CD4-positive, alpha-beta T cell (primary cell): ENCODE measurements at regions of chr9 and their contacts with region 1.

Region 1: GRCh38 chr9:101533334-101534107 is at the start of gene RNF20:
- DNase-seq: peak; percentile 98 to 100 (median 99)
- ATAC-seq: peak; percentile 90
- H3K4me3 ChIP-seq: peak within 1 kb of the TSS; percentile 67
- H3K4me3 Mint-ChIP-seq: peak within 1 kb of the TSS; percentile 90
- H3K27ac ChIP-seq: peak within 1 kb of the TSS; percentile 91 to 96
- H3K27ac Mint-ChIP-seq: peak within 1 kb of the TSS; percentile 97
- H3K4me1 ChIP-seq: peaks cover 16% of the 10 kb centered on the region
- H3K4me1 Mint-ChIP-seq: peaks cover 16% of the 10 kb centered on the region
- H3K27me3 ChIP-seq: no peaks in the 10 kb centered on the region
- H3K27me3 Mint-ChIP-seq: peaks cover 4% of the 10 kb centered on the region
- CTCF ChIP-seq: no peak
- total RNA-seq, gene RNF20: 26.9 to 27.6 TPM

Region 2: DNA sequence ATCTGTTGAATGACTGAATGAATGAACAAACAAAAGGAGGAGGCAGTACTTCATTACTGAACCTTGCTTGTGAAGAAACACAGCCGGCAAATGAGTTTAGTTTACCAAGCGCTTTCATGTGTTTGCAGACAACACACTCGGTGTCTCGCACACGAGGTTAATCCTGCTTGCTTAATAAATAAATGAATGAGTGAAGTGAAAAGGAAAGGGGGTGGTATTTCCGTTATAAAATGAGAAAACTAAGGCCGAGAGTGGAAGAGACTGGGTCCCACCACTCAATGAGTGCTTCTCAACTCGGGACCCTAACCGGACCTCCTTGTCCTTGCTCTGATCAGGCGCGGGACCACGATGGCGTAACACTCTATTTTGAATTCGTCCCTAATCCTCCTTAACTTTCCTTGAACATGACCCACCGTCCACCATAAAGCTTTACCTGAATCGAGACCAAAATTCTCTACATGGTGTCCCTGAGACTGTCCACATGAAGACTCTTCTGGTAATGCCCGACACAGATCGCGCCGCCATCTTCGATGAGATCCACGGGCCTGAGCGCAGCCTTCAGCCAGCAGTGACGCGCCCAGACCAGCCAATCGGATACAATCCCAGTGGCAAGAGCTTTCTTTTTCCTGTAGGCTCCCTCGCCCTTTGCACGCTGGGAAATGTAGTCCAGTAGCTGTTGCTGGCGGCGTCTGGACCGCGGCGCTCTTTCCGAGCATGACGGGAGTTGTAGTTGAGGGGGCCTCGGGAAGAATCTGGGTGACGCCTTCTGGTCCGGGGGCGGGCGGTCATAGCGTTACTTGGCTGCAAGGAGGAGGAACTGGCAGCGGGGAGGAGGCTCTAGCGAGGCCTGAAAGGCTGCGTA is 135.2 kb before region 1 on chr9 and contains the starts of genes MRPL50 and ZNF189:
- CTCF ChIA-PET with region 1: no interaction called
- POLR2A ChIA-PET with region 1: interaction called, 31 read pairs
- intact Hi-C with region 1: loop called (anchors 1 to 2 kb)
- DNase-seq: peak; percentile 90 to 99 (median 94)
- ATAC-seq: peak; percentile 94
- H3K4me3 ChIP-seq: peak within 1 kb of the TSS; percentile 81
- H3K4me3 Mint-ChIP-seq: peak within 1 kb of the TSS; percentile 99
- H3K27ac ChIP-seq: peak within 1 kb of the TSS; percentile 87 to 92
- H3K27ac Mint-ChIP-seq: peak within 1 kb of the TSS; percentile 99
- H3K4me1 ChIP-seq: peaks cover 32% of the 10 kb centered on the region
- H3K4me1 Mint-ChIP-seq: peaks cover 86% of the 10 kb centered on the region
- H3K27me3 ChIP-seq: no peaks in the 10 kb centered on the region
- H3K27me3 Mint-ChIP-seq: no peaks in the 10 kb centered on the region
- CTCF ChIP-seq: no peak
- total RNA-seq, gene MRPL50: 5.9 to 6.1 TPM
- total RNA-seq, gene ZNF189: 5.0 to 5.3 TPM

Region 3: DNA sequence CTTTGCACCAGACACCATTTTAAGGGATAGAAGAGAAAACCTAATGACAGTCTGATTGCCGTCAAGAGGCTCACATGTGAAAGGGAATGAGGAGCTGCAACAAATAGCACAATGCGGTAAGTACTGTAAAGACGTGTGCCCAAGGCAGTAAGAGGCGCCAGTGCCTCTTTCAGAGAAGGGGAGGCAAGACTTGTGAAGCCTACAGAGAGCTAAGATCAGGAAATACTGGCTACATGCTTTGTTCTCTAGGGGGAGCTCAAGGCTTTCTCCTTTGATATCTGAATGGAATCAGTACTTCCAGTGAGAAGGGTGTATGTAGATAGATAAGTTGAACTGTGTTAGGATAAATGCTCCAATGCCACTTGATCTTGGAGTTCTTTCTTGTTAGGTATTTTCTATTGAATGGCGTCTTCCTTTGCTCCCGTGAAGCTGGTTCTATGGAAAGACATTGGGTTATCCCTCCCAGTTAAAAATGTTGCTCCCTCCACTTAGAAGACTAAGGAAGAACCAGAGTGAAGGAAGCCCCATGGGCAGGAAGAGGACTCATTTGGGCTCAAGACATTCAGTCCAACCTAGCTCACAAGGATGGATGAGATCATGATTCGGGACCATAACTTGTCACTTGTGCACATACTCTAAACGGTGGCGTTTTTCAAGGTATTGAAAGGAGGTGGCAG is 74.4 kb before region 1 on chr9:
- CTCF ChIA-PET with region 1: interaction called, 19 read pairs
- POLR2A ChIA-PET with region 1: interaction called, 6 read pairs
- intact Hi-C with region 1: loop called (anchors 1 to 2 kb)
- DNase-seq: peak in 3 of 14 experiments; percentile 50 to 62 (median 57)
- ATAC-seq: peak; percentile 72
- H3K4me3 ChIP-seq: no peak overlapping the region
- H3K4me3 Mint-ChIP-seq: no peak overlapping the region
- H3K27ac ChIP-seq: no peak overlapping the region
- H3K27ac Mint-ChIP-seq: no peak overlapping the region
- H3K4me1 ChIP-seq: no peaks in the 10 kb centered on the region
- H3K4me1 Mint-ChIP-seq: no peaks in the 10 kb centered on the region
- H3K27me3 ChIP-seq: no peaks in the 10 kb centered on the region
- H3K27me3 Mint-ChIP-seq: peaks cover 44% of the 10 kb centered on the region
- CTCF ChIP-seq: peak; percentile 46

Region 4: GRCh38 chr9:101486693-101487442 is 46.7 kb before region 1 on chr9:
- CTCF ChIA-PET with region 1: no interaction called
- POLR2A ChIA-PET with region 1: no interaction called
- intact Hi-C with region 1: no loop called
- DNase-seq: no peak
- ATAC-seq: no peak
- H3K4me3 ChIP-seq: no peak overlapping the region
- H3K4me3 Mint-ChIP-seq: no peak overlapping the region
- H3K27ac ChIP-seq: no peak overlapping the region
- H3K27ac Mint-ChIP-seq: no peak overlapping the region
- H3K4me1 ChIP-seq: no peaks in the 10 kb centered on the region
- H3K4me1 Mint-ChIP-seq: no peaks in the 10 kb centered on the region
- H3K27me3 ChIP-seq: peaks cover 13 to 45% of the 10 kb centered on the region in 2 experiments
- H3K27me3 Mint-ChIP-seq: peaks cover 79% of the 10 kb centered on the region
- CTCF ChIP-seq: no peak

Region 5: DNA sequence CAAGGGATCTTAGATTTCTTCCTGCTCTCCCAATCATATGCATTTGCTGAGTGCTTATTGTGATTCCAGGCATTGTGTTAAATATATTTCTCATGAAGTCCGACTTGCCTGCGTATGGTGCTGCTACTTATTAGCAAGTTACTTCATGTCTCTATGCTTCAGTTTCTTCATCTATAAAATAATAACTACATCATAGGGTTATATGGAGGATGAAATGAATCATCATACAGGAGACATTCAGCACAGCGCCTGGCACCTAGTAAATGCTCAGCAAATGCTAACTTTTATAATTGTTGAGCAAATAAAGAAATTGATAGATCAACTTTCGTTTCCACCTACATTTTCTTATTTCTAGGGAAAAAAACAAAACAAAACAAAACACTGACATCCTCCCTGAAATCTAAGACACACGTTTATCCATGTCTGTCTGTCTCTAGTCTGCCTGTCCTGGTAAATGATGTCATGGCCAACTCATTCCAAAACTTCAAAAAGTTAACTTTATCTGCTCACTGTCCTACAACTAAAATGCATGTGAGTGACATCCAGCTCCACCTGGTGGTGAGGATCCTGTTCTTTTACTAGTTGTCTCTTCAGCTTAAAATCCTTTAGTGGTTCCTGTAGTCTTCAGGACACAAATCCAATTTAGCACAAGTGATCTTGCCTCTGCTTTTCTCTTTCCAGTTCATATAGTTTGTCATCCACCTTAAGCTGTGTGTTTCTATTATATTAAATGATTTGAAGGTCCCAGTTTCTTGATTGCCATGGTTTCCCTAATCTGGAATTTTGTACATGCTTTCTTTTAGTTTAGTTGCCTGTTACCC is 33.6 kb after region 1 on chr9:
- CTCF ChIA-PET with region 1: interaction called, 4 read pairs
- POLR2A ChIA-PET with region 1: interaction called, 14 read pairs
- intact Hi-C with region 1: loop called (anchors 1 to 2 kb)
- DNase-seq: peak in 9 of 14 experiments; percentile 9 to 64 (median 32)
- ATAC-seq: no peak
- H3K4me3 ChIP-seq: no peak overlapping the region
- H3K4me3 Mint-ChIP-seq: no peak overlapping the region
- H3K27ac ChIP-seq: no peak overlapping the region
- H3K27ac Mint-ChIP-seq: peak overlapping the region; percentile 91
- H3K4me1 ChIP-seq: peaks cover 25% of the 10 kb centered on the region
- H3K4me1 Mint-ChIP-seq: peaks cover 54% of the 10 kb centered on the region
- H3K27me3 ChIP-seq: no peaks in the 10 kb centered on the region
- H3K27me3 Mint-ChIP-seq: no peaks in the 10 kb centered on the region
- CTCF ChIP-seq: peak; percentile 60

Region 6: GRCh38 chr9:101572316-101572715 is 38.8 kb after region 1 on chr9:
- CTCF ChIA-PET with region 1: no interaction called
- POLR2A ChIA-PET with region 1: interaction called, 14 read pairs
- intact Hi-C with region 1: loop called (anchors 1 to 2 kb)
- DNase-seq: peak in 2 of 14 experiments; percentile 21 to 30
- ATAC-seq: no peak
- H3K4me3 ChIP-seq: no peak overlapping the region
- H3K4me3 Mint-ChIP-seq: peak overlapping the region; percentile 40
- H3K27ac ChIP-seq: peak overlapping the region in 1 of 2 donors; percentile 65
- H3K27ac Mint-ChIP-seq: peak overlapping the region; percentile 91
- H3K4me1 ChIP-seq: peaks cover 41% of the 10 kb centered on the region
- H3K4me1 Mint-ChIP-seq: peaks cover 83% of the 10 kb centered on the region
- H3K27me3 ChIP-seq: no peaks in the 10 kb centered on the region
- H3K27me3 Mint-ChIP-seq: no peaks in the 10 kb centered on the region
- CTCF ChIP-seq: no peak

Region 7: DNA sequence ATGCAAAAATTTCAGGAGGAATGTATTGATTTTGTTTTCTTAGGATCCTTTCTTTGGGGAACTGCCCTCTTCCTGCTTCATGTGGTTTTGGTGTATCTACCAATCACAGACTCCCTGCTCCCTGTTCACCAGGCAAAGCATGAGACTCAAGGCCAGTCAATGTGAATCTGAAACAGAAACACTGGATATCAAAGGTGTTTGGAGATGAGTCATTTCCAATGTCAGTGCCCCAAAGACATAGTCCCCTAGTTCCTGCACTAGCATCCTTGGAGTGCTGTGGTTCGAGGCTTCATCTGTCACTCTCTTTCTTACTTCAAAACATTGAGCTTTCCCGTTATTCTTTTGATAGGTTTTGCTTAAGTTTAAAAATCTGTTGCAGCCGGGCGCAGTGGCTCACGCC is 53.1 kb after region 1 on chr9:
- CTCF ChIA-PET with region 1: no interaction called
- POLR2A ChIA-PET with region 1: no interaction called
- intact Hi-C with region 1: no loop called
- DNase-seq: peak in 1 of 14 experiments; percentile 11
- ATAC-seq: no peak
- H3K4me3 ChIP-seq: no peak overlapping the region
- H3K4me3 Mint-ChIP-seq: no peak overlapping the region
- H3K27ac ChIP-seq: no peak overlapping the region
- H3K27ac Mint-ChIP-seq: no peak overlapping the region
- H3K4me1 ChIP-seq: no peaks in the 10 kb centered on the region
- H3K4me1 Mint-ChIP-seq: no peaks in the 10 kb centered on the region
- H3K27me3 ChIP-seq: no peaks in the 10 kb centered on the region
- H3K27me3 Mint-ChIP-seq: no peaks in the 10 kb centered on the region
- CTCF ChIP-seq: no peak

Region 8: GRCh38 chr9:101639785-101640665 is 106.5 kb after region 1 on chr9:
- CTCF ChIA-PET with region 1: no interaction called
- POLR2A ChIA-PET with region 1: no interaction called
- intact Hi-C with region 1: no loop called
- DNase-seq: no peak
- ATAC-seq: no peak
- H3K4me3 ChIP-seq: no peak overlapping the region
- H3K4me3 Mint-ChIP-seq: no peak overlapping the region
- H3K27ac ChIP-seq: no peak overlapping the region
- H3K27ac Mint-ChIP-seq: no peak overlapping the region
- H3K4me1 ChIP-seq: no peaks in the 10 kb centered on the region
- H3K4me1 Mint-ChIP-seq: no peaks in the 10 kb centered on the region
- H3K27me3 ChIP-seq: no peaks in the 10 kb centered on the region
- H3K27me3 Mint-ChIP-seq: peaks cover 4% of the 10 kb centered on the region
- CTCF ChIP-seq: no peak

Region 9: GRCh38 chr9:101738566-101739183 is 205.2 kb after region 1 on chr9 and contains the start of gene GRIN3A:
- CTCF ChIA-PET with region 1: no interaction called
- POLR2A ChIA-PET with region 1: no interaction called
- intact Hi-C with region 1: no loop called
- DNase-seq: no peak
- ATAC-seq: no peak
- H3K4me3 ChIP-seq: no peak within 1 kb of the TSS
- H3K4me3 Mint-ChIP-seq: no peak within 1 kb of the TSS
- H3K27ac ChIP-seq: no peak within 1 kb of the TSS
- H3K27ac Mint-ChIP-seq: no peak within 1 kb of the TSS
- H3K4me1 ChIP-seq: no peaks in the 10 kb centered on the region
- H3K4me1 Mint-ChIP-seq: no peaks in the 10 kb centered on the region
- H3K27me3 ChIP-seq: peaks cover 23 to 50% of the 10 kb centered on the region in 2 experiments
- H3K27me3 Mint-ChIP-seq: peaks cover 65% of the 10 kb centered on the region
- CTCF ChIP-seq: no peak
- total RNA-seq, gene GRIN3A: 0.03 TPM in 1 of 2 experiments, not detected in the other